PC-3 (cell line): ENCODE measurements at regions of chr10 and their contacts with region 1.

Region 1: GRCh38 chr10:13556676-13557319 is 28.0 kb upstream of the BEND7 start:
- DNase-seq: peak; percentile 72
- ATAC-seq: peak; percentile 83
- H3K4me3 ChIP-seq: no peak overlapping the region; the same call in 1 of the 2 replicates
- H3K27ac ChIP-seq: no peak overlapping the region
- H3K4me1 ChIP-seq: peaks cover 9% of the 10 kb centered on the region
- H3K27me3 ChIP-seq: no peaks in the 10 kb centered on the region
- CTCF ChIP-seq: no peak

Region 2: DNA sequence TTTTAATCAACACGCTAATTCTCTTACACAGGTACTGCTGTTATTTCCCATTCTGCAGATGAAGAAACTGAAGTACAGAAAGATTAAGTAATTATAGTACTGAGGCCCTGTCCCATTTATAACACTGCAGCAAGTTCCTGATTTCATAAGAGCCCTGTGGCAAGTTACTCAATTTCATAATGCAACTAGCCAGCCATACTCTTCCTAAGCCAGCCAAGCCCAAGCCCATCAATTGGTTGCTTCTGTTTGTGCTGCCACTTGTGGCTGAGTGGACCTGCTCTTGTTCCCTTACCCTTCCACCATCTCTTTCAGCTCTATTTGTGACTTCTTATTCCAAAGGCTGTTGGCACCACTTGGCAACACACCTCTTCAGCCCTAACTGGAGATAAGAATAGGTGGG is 10.2 kb after region 1 on chr10:
- CTCF ChIA-PET with region 1: no interaction called
- POLR2A ChIA-PET with region 1: interaction called, 16 read pairs
- intact Hi-C with region 1: no loop called
- DNase-seq: no peak
- ATAC-seq: no peak
- H3K4me3 ChIP-seq: no peak overlapping the region
- H3K27ac ChIP-seq: no peak overlapping the region
- H3K4me1 ChIP-seq: no peaks in the 10 kb centered on the region
- H3K27me3 ChIP-seq: no peaks in the 10 kb centered on the region
- CTCF ChIP-seq: no peak